SK-N-SH (cell line): ENCODE measurements at regions of chr7 and their contacts with region 1.

Region 1: DNA sequence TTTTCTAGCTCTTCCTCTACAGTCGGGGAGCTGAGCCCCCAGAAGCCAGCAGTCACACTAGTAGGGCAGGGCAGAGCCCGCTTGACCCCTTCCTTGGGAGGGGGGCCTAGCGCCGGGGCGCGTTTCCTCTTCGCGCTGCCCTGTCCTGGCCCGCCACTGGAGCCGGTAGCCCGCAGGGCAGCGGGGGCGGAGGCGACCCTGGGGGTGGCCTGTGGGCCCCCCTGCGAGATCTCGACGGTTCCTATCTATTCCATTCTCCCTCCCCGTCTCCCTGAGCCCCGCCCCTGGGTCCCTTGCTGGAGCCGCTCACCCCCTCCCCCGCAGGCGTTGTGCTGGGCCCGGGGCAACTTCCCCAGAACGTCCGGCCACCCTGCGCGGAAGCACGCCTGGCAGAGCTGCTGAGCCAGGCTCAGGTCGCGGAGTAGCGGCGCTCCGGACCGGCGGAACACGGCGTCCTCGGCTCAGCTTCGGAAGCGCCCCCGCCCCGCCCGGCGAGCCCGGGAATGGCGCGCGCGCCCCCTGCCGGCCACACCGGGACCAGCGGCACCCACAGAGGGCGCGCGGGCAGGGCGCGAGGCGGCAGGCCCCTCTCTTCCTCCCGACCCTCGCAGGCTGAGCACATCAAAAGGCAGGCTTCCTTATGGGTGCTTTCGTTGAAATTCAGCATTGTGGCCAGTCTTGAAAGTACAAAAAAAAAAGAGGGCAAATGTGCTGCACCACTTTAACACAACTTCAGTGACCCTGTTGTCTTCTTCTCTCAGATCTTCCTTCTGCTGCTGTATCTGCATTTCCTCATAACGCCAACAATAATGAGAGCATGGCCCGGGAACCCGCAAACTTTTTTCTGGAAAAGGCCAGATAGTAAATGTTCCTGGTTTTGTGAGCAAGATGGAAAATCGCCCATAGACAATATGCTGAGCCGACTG is 327.6 kb downstream of the TNS3 start:
- DNase-seq: peak; percentile 98
- H3K4me3 ChIP-seq: peak overlapping the region; percentile 65 to 71
- H3K27ac ChIP-seq: peak overlapping the region; percentile 58 to 62
- H3K4me1 ChIP-seq: peaks cover 4 to 14% of the 10 kb centered on the region in 2 experiments; a peak in 2 of 4 replicates
- H3K27me3 ChIP-seq: no peaks in the 10 kb centered on the region
- CTCF ChIP-seq: peak; percentile 98
- EP300 ChIP-seq: no peak
- RAD21 ChIP-seq: peak; percentile 66

Region 2: GRCh38 chr7:47239931-47240421 is 14.4 kb before region 1 on chr7:
- CTCF ChIA-PET with region 1: interaction called, 36 read pairs
- POLR2A ChIA-PET with region 1: no interaction called
- DNase-seq: no peak
- H3K4me3 ChIP-seq: no peak overlapping the region
- H3K27ac ChIP-seq: no peak overlapping the region
- H3K4me1 ChIP-seq: no peaks in the 10 kb centered on the region
- H3K27me3 ChIP-seq: peaks cover 5% of the 10 kb centered on the region
- CTCF ChIP-seq: no peak
- EP300 ChIP-seq: no peak
- RAD21 ChIP-seq: no peak